ENCODE measurements at regions of chr22 and their contacts with region 1.

Region 1: DNA sequence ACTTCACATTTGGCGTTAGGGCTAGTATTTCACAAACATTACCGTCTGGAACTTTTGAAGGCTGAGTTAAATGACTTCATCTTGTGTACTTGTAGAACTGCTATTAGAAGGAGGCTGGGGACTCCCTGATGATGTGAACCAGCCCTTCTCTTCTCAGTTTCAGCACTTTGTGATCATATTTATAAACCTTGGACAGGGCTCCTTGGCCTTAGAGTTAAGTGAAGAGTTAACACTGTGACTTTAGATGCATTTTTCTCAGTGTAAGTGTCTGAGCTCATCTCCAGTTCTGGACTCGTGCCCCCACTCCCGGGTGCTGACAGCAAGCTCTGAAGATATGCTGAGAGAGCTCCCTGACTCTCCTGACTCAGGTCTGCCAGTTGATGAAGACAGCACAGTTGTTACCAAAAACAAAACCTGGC is 8.4 kb downstream of the MIAT start:
- DNase-seq: no peak
- ATAC-seq: peak; percentile 63
- H3K4me3 ChIP-seq: no peak overlapping the region
- H3K27ac ChIP-seq: peak overlapping the region; percentile 48; the same call in 1 of the 2 replicates
- H3K4me1 ChIP-seq: peaks cover 31% of the 10 kb centered on the region
- H3K27me3 ChIP-seq: no peaks in the 10 kb centered on the region
- CTCF ChIP-seq: no peak
- EP300 ChIP-seq: no peak
- POLR2A ChIP-seq: no peak
- RAD21 ChIP-seq: no peak

Region 2: DNA sequence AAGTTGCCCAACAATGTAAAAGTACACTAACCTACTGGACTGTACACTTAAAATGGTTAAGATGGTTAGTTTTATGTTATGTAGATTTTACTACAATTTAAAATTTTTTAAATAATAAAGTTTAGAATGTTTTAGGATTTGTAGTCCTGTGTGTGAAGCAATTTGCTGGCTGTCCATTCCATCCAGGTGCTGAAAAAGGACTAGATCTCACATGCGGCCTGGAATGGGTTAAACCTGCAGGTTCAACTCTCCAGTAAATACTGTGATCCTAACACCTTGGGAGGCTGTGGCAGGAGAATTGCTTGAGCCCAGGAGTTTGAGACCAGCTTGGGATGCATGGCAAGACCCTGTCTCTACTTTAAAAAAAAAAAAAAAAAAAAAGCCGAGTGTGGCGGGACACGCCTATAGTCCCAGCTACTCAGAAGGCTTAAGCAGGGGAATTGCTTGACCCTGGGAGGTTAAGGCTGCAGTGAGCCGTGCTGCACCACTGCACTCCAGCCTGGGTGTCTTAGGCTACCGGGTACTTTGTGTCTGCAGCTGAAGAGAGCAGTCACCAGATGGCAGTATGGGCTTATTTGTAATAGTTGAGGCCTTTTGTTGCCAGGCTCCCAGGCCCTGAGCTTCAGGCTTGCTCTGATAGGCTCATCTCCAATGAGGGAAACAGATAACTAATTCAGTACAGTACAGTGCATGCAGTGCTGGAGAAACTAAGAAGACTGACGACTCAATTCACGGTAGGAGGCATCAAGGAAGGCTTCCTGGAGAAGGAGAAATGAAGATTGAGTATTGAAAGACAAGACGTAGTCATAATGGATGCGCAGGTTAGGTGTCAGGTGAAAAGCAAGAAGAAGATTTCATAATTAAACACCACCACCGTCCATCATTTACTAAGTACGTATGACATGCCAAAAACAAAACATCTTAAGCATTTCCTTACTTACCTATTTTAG is 301.5 kb before region 1 on chr22:
- CTCF ChIA-PET with region 1: interaction called, 16 read pairs
- POLR2A ChIA-PET with region 1: no interaction called
- RAD21 ChIA-PET with region 1: interaction called, 6 read pairs
- SMC1A ChIA-PET with region 1: interaction called, 4 read pairs
- in situ Hi-C with region 1: no loop called
- intact Hi-C with region 1: no loop called
- DNase-seq: peak; percentile 27
- ATAC-seq: peak; percentile 96
- H3K4me3 ChIP-seq: no peak overlapping the region
- H3K27ac ChIP-seq: no peak overlapping the region
- H3K4me1 ChIP-seq: no peaks in the 10 kb centered on the region
- H3K27me3 ChIP-seq: no peaks in the 10 kb centered on the region
- CTCF ChIP-seq: peak; percentile 72 to 78 (median 75)
- EP300 ChIP-seq: no peak
- POLR2A ChIP-seq: no peak
- RAD21 ChIP-seq: peak; percentile 80

Region 3: GRCh38 chr22:26471522-26471921 is 194.3 kb before region 1 on chr22:
- CTCF ChIA-PET with region 1: no interaction called
- POLR2A ChIA-PET with region 1: no interaction called
- RAD21 ChIA-PET with region 1: no interaction called
- SMC1A ChIA-PET with region 1: no interaction called
- in situ Hi-C with region 1: no loop called
- intact Hi-C with region 1: no loop called
- DNase-seq: no peak
- ATAC-seq: no peak
- H3K4me3 ChIP-seq: no peak overlapping the region
- H3K27ac ChIP-seq: no peak overlapping the region
- H3K4me1 ChIP-seq: peaks cover 5% of the 10 kb centered on the region
- H3K27me3 ChIP-seq: no peaks in the 10 kb centered on the region
- CTCF ChIP-seq: no peak
- EP300 ChIP-seq: no peak
- POLR2A ChIP-seq: no peak
- RAD21 ChIP-seq: no peak

Region 4: GRCh38 chr22:26483439-26484359 is 182.1 kb before region 1 on chr22 and contains the starts of genes HPS4 and SRRD:
- CTCF ChIA-PET with region 1: interaction called, 25 read pairs
- POLR2A ChIA-PET with region 1: interaction called, 4 read pairs
- RAD21 ChIA-PET with region 1: interaction called, 4 read pairs
- SMC1A ChIA-PET with region 1: interaction called, 9 read pairs
- in situ Hi-C with region 1: no loop called
- intact Hi-C with region 1: no loop called
- DNase-seq: peak; percentile 56
- ATAC-seq: peak; percentile 79
- H3K4me3 ChIP-seq: peak within 1 kb of the TSS; percentile 97
- H3K27ac ChIP-seq: peak within 1 kb of the TSS; percentile 88
- H3K4me1 ChIP-seq: peaks cover 23% of the 10 kb centered on the region
- H3K27me3 ChIP-seq: no peaks in the 10 kb centered on the region
- CTCF ChIP-seq: no peak
- EP300 ChIP-seq: peak; percentile 12 to 19; a peak in 1 of 4 replicates
- POLR2A ChIP-seq: peak; percentile 95
- RAD21 ChIP-seq: no peak
- polyA plus RNA-seq, gene HPS4: 11.7 to 12.3 TPM
- polyA plus RNA-seq, gene SRRD: 4.1 to 15.4 TPM

Region 5: GRCh38 chr22:26529345-26529744 is 136.5 kb before region 1 on chr22:
- CTCF ChIA-PET with region 1: interaction called, 12 read pairs
- POLR2A ChIA-PET with region 1: interaction called, 3 read pairs
- RAD21 ChIA-PET with region 1: interaction called, 12 read pairs
- SMC1A ChIA-PET with region 1: interaction called, 5 read pairs
- in situ Hi-C with region 1: no loop called
- intact Hi-C with region 1: no loop called
- DNase-seq: no peak
- ATAC-seq: no peak
- H3K4me3 ChIP-seq: no peak overlapping the region
- H3K27ac ChIP-seq: no peak overlapping the region
- H3K4me1 ChIP-seq: peaks cover 12% of the 10 kb centered on the region
- H3K27me3 ChIP-seq: no peaks in the 10 kb centered on the region
- CTCF ChIP-seq: no peak
- EP300 ChIP-seq: no peak
- POLR2A ChIP-seq: no peak
- RAD21 ChIP-seq: no peak

Region 6: GRCh38 chr22:26642465-26643417 is 23.1 kb before region 1 on chr22:
- CTCF ChIA-PET with region 1: interaction called, 12 read pairs
- POLR2A ChIA-PET with region 1: no interaction called
- RAD21 ChIA-PET with region 1: no interaction called
- SMC1A ChIA-PET with region 1: interaction called, 5 read pairs
- in situ Hi-C with region 1: no loop called
- intact Hi-C with region 1: no loop called
- DNase-seq: no peak
- ATAC-seq: peak; percentile 80
- H3K4me3 ChIP-seq: no peak overlapping the region
- H3K27ac ChIP-seq: peak overlapping the region; percentile 50
- H3K4me1 ChIP-seq: peaks cover 15% of the 10 kb centered on the region
- H3K27me3 ChIP-seq: no peaks in the 10 kb centered on the region; a peak in 1 of 4 replicates
- CTCF ChIP-seq: peak; percentile 31 to 40 (median 39); a peak in 5 of 6 replicates
- EP300 ChIP-seq: no peak
- POLR2A ChIP-seq: 0 out of 2 replicates have a peak, but pooled peaks have one; percentile 38
- RAD21 ChIP-seq: no peak

Region 7: DNA sequence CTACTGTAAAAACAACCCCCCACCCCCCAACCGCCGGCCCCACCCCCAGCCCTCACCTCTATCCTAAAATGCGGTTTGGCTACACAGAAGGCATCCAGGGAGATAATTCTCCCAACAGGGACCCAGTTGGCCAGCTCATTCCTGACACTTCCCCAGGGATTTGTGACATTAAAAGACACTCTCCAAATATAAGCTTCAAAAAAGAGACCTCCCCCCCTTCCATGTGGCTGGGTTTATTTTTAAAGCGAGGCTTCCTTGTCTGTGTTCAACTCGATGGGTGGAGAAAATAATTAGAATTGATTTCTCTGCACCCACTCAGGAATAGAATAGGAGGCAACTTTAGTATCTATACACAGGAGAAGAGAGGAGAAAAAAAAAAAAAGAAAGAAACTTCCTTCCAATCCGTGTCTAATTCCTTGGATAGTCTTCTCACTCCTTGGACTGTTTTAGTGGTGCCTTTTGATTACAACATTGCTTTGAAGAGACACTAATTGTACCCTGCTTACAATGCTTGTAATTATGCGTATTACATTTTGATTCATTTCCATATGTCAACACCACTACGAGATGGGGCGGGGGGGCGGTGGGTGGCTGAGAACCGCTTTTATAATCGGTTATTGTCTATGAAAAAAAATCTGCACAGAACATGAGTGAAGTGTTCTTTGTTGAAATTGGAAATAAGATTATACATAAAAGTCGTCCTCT is 492.0 kb after region 1 on chr22:
- CTCF ChIA-PET with region 1: no interaction called
- POLR2A ChIA-PET with region 1: no interaction called
- RAD21 ChIA-PET with region 1: no interaction called
- SMC1A ChIA-PET with region 1: no interaction called
- in situ Hi-C with region 1: no loop called
- intact Hi-C with region 1: no loop called
- DNase-seq: no peak
- ATAC-seq: no peak
- H3K4me3 ChIP-seq: no peak overlapping the region
- H3K27ac ChIP-seq: no peak overlapping the region
- H3K4me1 ChIP-seq: no peaks in the 10 kb centered on the region
- H3K27me3 ChIP-seq: no peaks in the 10 kb centered on the region; a peak in 1 of 4 replicates
- CTCF ChIP-seq: no peak
- EP300 ChIP-seq: no peak
- POLR2A ChIP-seq: no peak
- RAD21 ChIP-seq: no peak

Measured in GM12878 (cell line).